ENCODE measurements at regions of chr14 and their contacts with region 1.

Region 1: GRCh38 chr14:96146131-96146806 is 58.4 kb upstream of the BDKRB2 start:
- DNase-seq: peak; percentile 80
- H3K4me3 ChIP-seq: no peak overlapping the region
- H3K27ac ChIP-seq: no peak overlapping the region
- H3K4me1 ChIP-seq: peaks cover 4% of the 10 kb centered on the region
- H3K27me3 ChIP-seq: no peaks in the 10 kb centered on the region
- CTCF ChIP-seq: no peak
- POLR2A ChIP-seq: no peak

Region 2: GRCh38 chr14:96126339-96126782 is 19.9 kb before region 1 on chr14:
- CTCF ChIA-PET with region 1: no interaction called
- POLR2A ChIA-PET with region 1: no interaction called
- dilution Hi-C with region 1: no loop called
- intact Hi-C with region 1: loop called (anchors 1 kb)
- DNase-seq: peak; percentile 50
- H3K4me3 ChIP-seq: no peak overlapping the region
- H3K27ac ChIP-seq: no peak overlapping the region
- H3K4me1 ChIP-seq: no peaks in the 10 kb centered on the region
- H3K27me3 ChIP-seq: no peaks in the 10 kb centered on the region
- CTCF ChIP-seq: no peak
- POLR2A ChIP-seq: no peak

Region 3: GRCh38 chr14:96181191-96182056 is 35.2 kb after region 1 on chr14:
- CTCF ChIA-PET with region 1: no interaction called
- POLR2A ChIA-PET with region 1: no interaction called
- dilution Hi-C with region 1: no loop called
- intact Hi-C with region 1: loop called (anchors 1 kb)
- DNase-seq: peak; percentile 6
- H3K4me3 ChIP-seq: no peak overlapping the region
- H3K27ac ChIP-seq: no peak overlapping the region
- H3K4me1 ChIP-seq: peaks cover 4% of the 10 kb centered on the region
- H3K27me3 ChIP-seq: no peaks in the 10 kb centered on the region
- CTCF ChIP-seq: no peak
- POLR2A ChIP-seq: no peak